HEK293 (cell line): ENCODE measurements at regions of chr20 and their contacts with region 1.

Region 1: GRCh38 chr20:35146920-35147574 is at the start of gene EDEM2:
- H3K4me3 ChIP-seq: peak within 1 kb of the TSS; percentile 78
- H3K27ac ChIP-seq: no peak within 1 kb of the TSS; the same call in 1 of the 2 replicates
- H3K4me1 ChIP-seq: no peaks in the 10 kb centered on the region
- CTCF ChIP-seq: peak; percentile 80

Region 2: DNA sequence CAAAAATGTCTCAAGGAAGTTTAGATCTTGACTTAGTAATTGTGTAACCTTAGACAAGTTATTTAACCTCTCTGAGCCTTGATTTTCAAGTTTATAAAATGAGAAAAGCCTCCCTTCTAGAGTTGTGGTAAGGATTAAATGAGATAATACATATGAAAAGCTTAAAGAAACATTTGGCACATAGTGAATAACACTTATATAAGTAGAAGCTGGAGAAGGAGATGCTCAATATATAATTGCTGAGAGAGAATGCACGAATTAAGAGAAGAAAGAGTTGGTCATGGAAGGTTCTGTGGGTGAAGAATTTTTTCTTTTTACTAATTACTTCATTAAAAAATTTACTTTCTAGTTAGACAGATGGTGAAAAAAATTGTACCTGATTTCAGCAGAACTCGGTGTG is 265.4 kb before region 1 on chr20:
- CTCF ChIA-PET with region 1: no interaction called
- POLR2A ChIA-PET with region 1: no interaction called
- H3K4me3 ChIP-seq: no peak overlapping the region
- H3K27ac ChIP-seq: no peak overlapping the region
- H3K4me1 ChIP-seq: peaks cover 3% of the 10 kb centered on the region; the same call in 1 of the 2 replicates
- CTCF ChIP-seq: no peak

Region 3: DNA sequence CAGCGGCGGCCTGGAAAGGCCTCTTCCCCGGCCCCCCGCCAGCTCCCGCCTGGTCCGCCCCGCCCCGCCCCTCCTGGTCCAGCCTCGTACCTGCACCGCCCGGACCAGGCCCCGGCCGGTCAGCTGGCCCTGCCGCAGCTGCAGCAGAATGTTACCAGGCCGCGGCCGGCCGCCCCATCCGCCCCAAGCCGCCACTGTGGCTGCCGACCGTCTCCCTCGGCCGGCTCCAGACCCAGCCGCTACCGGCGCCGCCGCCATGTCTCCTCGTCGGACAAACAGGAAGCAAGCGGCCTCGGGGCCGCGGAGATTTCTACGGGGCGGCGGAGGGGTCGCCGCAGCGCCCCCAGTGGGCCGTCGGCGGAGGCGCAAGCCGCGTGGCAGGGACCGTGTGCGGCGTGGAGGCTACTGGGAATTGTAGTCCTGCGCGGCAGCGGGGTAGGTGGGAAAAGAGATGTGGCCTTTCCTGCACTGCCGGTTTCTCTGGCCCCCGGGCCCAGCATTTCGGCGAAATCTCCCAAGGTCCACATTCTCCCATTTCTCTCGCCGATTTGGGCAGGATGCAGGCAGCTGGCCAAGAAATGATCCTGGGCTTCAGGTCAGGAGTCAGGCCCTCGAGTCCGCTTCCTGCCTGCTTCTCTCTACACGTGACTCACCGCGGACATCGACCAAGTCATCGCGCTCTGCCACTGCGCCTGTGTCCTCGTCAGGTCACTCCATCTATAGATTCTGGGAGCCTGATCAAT is 54.4 kb before region 1 on chr20 and contains the start of gene TRPC4AP:
- CTCF ChIA-PET with region 1: interaction called, 12 read pairs
- POLR2A ChIA-PET with region 1: interaction called, 3 read pairs
- H3K4me3 ChIP-seq: peak within 1 kb of the TSS; percentile 98
- H3K27ac ChIP-seq: peak within 1 kb of the TSS; percentile 77
- H3K4me1 ChIP-seq: peaks cover 14% of the 10 kb centered on the region
- CTCF ChIP-seq: peak; percentile 97

Region 4: GRCh38 chr20:35104685-35105295 is 42.3 kb before region 1 on chr20:
- CTCF ChIA-PET with region 1: no interaction called
- POLR2A ChIA-PET with region 1: no interaction called
- H3K4me3 ChIP-seq: no peak overlapping the region
- H3K27ac ChIP-seq: no peak overlapping the region
- H3K4me1 ChIP-seq: no peaks in the 10 kb centered on the region
- CTCF ChIP-seq: no peak

Region 5: GRCh38 chr20:35171438-35171752 is 24.3 kb after region 1 on chr20:
- CTCF ChIA-PET with region 1: interaction called, 18 read pairs
- POLR2A ChIA-PET with region 1: no interaction called
- H3K4me3 ChIP-seq: peak overlapping the region; percentile 45
- H3K27ac ChIP-seq: no peak overlapping the region
- H3K4me1 ChIP-seq: 0 out of 2 replicates have a peak, but pooled peaks cover 3% of the 10 kb centered on the region
- CTCF ChIP-seq: no peak

Region 6: DNA sequence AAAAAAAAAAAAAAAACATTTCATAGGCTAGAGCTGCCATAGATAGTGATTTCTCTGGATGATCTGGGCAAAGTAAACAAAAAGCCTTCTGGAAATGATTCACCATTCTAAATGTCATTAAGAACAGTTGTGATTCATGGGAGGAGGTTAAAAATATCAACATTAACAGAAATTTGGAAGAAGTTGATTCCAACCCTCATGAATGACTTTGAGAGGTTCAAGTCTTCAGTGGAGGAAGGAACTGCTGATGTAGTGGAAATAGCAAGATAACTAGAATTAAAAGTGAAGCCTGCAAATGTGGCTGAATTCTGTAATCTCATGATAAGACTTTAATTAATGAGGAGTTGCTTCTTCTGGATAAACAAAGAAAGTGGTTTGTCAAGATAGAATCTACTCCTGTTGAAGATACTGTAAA is 52.7 kb after region 1 on chr20:
- CTCF ChIA-PET with region 1: interaction called, 13 read pairs
- POLR2A ChIA-PET with region 1: no interaction called
- H3K4me3 ChIP-seq: no peak overlapping the region
- H3K27ac ChIP-seq: no peak overlapping the region
- H3K4me1 ChIP-seq: no peaks in the 10 kb centered on the region
- CTCF ChIP-seq: no peak

Region 7: DNA sequence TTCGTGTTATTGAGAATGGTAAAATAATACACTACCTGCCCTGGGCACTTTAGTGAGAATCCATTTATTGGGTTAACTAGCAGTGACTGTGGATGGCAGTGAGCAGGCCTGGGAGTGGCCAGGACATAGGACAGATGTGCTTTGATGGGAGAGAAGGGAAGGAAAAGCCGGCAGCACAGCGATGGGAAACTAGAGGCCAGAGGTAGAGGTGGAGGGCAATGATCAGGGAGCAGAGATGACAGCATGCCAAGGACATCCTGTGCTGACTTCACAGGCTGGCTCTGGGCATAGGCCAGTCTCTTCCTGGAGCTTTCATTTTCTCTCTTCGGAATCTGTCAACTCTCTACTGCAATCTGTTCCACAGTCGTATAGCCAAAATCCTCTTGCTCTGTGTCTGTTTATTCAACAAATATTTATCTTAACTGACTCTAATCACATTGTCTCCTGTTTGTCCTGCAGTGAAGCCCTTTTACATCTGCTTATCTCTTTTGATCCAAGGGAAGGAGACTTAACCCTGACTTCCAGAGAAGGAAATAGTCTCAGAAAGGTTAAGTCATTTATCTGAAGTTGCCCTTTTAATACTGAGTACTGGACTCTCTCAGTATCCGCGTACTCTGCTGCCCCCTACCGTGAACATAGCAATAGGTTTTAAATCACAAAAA is 61.0 kb after region 1 on chr20:
- CTCF ChIA-PET with region 1: interaction called, 86 read pairs
- POLR2A ChIA-PET with region 1: no interaction called
- H3K4me3 ChIP-seq: no peak overlapping the region
- H3K27ac ChIP-seq: no peak overlapping the region
- H3K4me1 ChIP-seq: no peaks in the 10 kb centered on the region
- CTCF ChIP-seq: peak; percentile 76

Region 8: DNA sequence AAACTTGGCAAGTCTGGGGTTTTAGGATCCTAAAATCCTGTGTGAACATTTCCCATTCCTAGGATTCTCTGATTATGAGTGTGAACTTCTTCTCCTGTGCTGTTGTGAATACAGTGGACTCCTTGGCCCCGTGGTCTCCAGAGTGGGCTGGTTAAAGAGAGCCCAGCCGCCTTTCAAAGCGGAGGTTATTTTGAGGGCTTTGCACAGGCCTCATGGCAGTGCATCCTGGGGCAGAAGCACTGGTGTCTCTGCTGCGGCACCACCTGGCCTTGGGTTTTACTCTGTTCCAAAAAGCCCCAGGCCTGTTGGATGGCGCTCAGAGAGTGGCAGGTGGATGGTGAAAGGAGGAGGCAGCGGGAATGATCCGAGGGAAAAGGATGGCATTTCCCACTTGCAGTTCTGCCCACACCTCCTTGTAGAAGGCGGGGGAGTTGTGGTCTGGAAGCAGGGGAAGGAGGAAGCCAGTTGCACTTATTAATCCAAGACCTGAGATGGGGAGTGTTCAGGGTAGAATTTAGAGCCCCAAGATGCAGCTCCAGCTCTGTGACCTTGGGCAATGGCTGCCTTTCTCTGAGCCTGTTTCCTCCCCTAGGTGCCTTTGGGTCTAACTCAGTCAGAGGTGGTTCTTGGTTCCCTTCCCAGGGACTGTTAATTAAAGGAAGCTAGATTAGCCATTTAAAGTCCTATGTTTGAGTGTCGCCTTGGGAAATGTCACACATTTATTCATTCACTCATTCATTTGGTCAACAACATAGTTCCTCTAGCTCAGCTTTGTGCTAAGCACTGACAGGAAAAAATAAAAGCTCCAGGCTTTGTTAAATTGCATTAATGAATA is 101.8 kb after region 1 on chr20:
- CTCF ChIA-PET with region 1: no interaction called
- POLR2A ChIA-PET with region 1: no interaction called
- H3K4me3 ChIP-seq: no peak overlapping the region
- H3K27ac ChIP-seq: no peak overlapping the region
- H3K4me1 ChIP-seq: 0 out of 2 replicates have a peak, but pooled peaks cover 3% of the 10 kb centered on the region
- CTCF ChIP-seq: no peak

Region 9: GRCh38 chr20:35269055-35269781 is 122.2 kb after region 1 on chr20:
- CTCF ChIA-PET with region 1: interaction called, 150 read pairs
- POLR2A ChIA-PET with region 1: interaction called, 8 read pairs
- H3K4me3 ChIP-seq: no peak overlapping the region
- H3K27ac ChIP-seq: no peak overlapping the region
- H3K4me1 ChIP-seq: no peaks in the 10 kb centered on the region
- CTCF ChIP-seq: peak; percentile 87

Region 10: GRCh38 chr20:35284267-35284991 is 137.4 kb after region 1 on chr20 and contains the start of gene EIF6:
- CTCF ChIA-PET with region 1: no interaction called
- POLR2A ChIA-PET with region 1: interaction called, 12 read pairs
- H3K4me3 ChIP-seq: peak within 1 kb of the TSS; percentile 86
- H3K27ac ChIP-seq: peak within 1 kb of the TSS; percentile 81
- H3K4me1 ChIP-seq: no peaks in the 10 kb centered on the region
- CTCF ChIP-seq: no peak